ENCODE measurements at regions of chr4 and their contacts with region 1.

Region 1: DNA sequence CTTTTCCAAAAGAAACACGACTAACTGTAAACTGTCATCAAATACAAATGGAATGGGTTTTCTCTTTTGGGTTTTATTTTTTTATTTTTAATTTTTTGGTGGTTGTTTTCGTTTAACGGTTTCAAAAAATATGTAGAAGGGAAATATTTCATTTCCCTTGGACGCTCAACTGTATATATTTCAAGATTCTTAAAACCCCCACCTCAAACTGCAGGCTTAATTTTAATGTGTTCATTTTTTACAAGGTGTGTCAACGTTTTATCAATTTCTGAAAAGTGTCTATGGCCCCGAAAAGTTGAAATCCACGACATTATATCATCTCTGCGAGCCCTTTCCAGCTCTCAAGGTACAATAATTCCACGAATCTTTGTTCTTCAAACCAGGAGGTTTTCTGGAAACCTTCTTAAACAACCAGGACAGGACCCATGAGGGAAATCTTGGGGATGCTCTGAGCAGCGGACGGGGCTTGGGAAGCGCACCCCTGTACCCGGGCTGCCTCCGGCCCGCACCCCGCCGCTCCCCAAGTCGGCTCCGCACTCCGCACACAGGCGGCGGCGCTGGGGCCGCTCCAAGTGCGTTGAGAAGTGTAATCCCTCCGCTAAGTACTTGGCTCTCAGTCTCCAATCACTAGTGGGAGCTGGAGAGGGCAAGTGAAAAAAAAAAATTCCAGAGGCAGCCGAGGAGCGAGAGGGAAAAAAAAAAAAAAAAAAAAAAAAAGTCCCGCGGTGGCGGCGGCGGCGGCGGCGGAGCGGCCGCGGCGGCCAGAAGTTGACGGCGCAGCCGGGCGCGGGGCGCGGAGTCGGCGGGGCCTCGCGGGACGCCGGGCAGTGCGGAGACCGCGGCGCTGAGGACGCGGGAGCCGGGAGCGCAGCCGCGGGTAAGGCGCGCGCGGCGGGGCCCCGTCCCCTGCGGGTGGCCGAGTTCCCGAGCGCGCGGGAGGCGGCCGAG is at the start of gene BMPR1B:
- DNase-seq: peak in 1 of 2 donors; percentile 74
- H3K4me3 ChIP-seq: peak within 1 kb of the TSS; percentile 76 to 81
- H3K27ac ChIP-seq: peak within 1 kb of the TSS; percentile 79 to 85
- H3K4me1 ChIP-seq: no peaks in the 10 kb centered on the region
- H3K27me3 ChIP-seq: no peaks in the 10 kb centered on the region
- CTCF ChIP-seq: peak in 1 of 3 experiments; percentile 12
- total RNA-seq, gene BMPR1B: 3.8 TPM

Region 2: DNA sequence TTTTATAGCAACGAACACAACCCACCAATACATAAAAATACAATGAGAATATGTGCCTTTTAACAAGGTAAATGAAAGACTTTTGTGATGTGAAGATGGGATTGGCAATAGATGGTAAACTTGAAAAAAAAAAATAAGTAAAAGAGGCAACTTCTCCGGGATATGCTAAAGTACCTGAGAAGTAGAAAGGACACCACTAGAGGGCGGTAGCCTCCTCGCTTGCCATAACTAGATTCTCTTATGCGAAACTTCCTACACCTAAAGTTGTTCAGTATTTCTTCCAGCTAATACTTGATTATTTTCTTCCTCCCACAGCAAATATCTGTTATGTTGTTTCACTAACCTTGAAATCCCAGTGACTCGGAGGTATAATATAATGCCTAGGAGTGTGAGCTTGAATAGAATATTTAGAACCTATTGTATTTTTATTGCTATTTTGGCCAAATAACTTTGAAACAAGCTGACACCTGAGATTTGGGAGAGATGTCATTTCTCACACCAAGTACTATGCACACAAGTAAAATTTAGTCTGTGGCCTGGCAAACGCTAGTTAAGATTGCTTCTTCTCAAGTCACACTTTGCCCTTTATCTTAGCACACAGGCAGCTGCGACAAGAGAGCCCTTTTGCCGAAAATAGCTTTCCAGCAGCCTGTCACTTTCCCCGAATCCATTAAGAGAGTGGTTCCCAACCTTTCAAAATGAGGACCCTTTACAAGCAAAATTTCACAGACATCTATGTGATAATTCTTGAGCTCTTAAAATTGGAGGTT is 350.6 kb before region 1 on chr4:
- intact Hi-C with region 1: loop called (anchors 10 kb)
- DNase-seq: peak in 1 of 2 donors; percentile 91
- H3K4me3 ChIP-seq: peak overlapping the region in 1 of 2 donors; percentile 57
- H3K27ac ChIP-seq: peak overlapping the region; percentile 80 to 82
- H3K4me1 ChIP-seq: peaks cover 10 to 26% of the 10 kb centered on the region in 2 donors
- H3K27me3 ChIP-seq: no peaks in the 10 kb centered on the region
- CTCF ChIP-seq: peak; percentile 34 to 88 (median 86)

Region 3: DNA sequence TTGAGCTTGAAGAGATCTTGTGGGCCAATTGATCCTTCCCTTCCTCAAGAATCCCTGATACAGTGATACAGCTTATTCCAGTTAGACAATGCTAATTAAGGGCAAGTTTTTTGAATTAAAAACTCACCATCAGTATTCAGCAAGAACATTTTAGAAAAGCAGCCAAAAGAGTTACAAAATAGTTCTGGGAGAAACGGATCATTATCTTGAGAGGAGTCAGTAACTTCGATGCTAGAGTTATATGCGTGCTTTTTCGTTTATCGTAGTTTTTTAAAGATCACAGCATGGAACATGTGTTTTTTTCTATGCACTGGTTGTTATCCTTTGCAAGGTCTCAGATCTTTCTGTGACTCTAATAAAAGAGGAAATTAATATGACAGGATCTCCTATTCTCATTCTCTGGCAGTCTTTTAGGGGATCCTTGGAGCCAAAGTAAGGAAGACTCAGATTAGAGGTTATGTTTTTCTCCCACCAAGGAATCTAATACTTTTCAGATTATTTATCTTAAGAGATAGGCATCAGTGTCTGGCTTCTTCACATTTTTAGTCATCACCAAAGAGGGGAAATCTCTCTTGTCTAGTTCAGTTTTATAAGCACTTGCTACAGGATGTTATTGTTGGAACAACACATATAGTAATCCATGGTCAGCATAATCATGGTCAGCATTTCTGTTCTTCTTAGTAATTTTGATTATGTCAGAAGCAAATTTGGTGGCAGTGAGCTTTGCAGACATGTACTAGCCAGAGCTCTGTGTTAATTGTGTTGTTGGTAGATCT is 196.0 kb before region 1 on chr4:
- intact Hi-C with region 1: no loop called
- DNase-seq: no peak
- H3K4me3 ChIP-seq: no peak overlapping the region
- H3K27ac ChIP-seq: peak overlapping the region; percentile 64 to 65
- H3K4me1 ChIP-seq: peaks cover 4 to 56% of the 10 kb centered on the region in 2 donors
- H3K27me3 ChIP-seq: no peaks in the 10 kb centered on the region
- CTCF ChIP-seq: no peak

Region 4: DNA sequence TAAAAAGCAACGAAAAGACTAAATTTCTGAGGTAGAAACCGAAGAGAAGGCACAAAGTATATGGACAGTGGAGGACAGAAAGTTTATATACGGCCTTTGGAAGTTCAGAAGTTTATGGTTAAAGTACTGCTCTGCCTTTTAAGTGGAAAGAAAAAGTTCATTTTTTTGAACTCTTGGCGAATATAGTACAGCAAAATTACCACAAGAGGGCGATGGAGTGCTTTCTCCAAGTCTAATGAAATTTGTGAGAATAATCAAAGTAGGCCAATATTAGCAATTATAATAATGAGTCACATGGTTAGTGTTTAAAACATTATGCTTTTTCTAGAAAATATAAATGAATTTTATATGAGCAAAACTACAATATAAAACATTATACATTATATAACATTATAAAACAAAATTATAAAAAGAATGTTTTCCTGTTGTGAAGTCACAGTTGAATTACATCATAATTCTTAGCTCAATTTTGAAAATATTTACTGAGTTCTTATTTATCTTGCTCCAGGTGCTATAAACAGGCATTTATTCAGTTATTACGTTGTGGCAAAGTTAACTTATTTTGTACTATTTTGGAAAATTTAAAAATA is 135.9 kb before region 1 on chr4:
- intact Hi-C with region 1: loop called (anchors 5 kb)
- DNase-seq: no peak
- H3K4me3 ChIP-seq: no peak overlapping the region
- H3K27ac ChIP-seq: no peak overlapping the region
- H3K4me1 ChIP-seq: peaks cover 0 to 2% of the 10 kb centered on the region in 2 donors
- H3K27me3 ChIP-seq: no peaks in the 10 kb centered on the region
- CTCF ChIP-seq: peak; percentile 39 to 75 (median 65)

Region 5: GRCh38 chr4:94788643-94789042 is 31.2 kb after region 1 on chr4:
- intact Hi-C with region 1: no loop called
- DNase-seq: no peak
- H3K4me3 ChIP-seq: no peak overlapping the region
- H3K27ac ChIP-seq: no peak overlapping the region
- H3K4me1 ChIP-seq: no peaks in the 10 kb centered on the region
- H3K27me3 ChIP-seq: no peaks in the 10 kb centered on the region
- CTCF ChIP-seq: no peak

Region 6: GRCh38 chr4:94889946-94890345 is 132.5 kb after region 1 on chr4:
- intact Hi-C with region 1: loop called (anchors 5 kb)
- DNase-seq: no peak
- H3K4me3 ChIP-seq: no peak overlapping the region
- H3K27ac ChIP-seq: peak overlapping the region in 1 of 2 donors; percentile 3
- H3K4me1 ChIP-seq: peaks cover 0 to 10% of the 10 kb centered on the region in 2 donors
- H3K27me3 ChIP-seq: no peaks in the 10 kb centered on the region
- CTCF ChIP-seq: no peak

Region 7: DNA sequence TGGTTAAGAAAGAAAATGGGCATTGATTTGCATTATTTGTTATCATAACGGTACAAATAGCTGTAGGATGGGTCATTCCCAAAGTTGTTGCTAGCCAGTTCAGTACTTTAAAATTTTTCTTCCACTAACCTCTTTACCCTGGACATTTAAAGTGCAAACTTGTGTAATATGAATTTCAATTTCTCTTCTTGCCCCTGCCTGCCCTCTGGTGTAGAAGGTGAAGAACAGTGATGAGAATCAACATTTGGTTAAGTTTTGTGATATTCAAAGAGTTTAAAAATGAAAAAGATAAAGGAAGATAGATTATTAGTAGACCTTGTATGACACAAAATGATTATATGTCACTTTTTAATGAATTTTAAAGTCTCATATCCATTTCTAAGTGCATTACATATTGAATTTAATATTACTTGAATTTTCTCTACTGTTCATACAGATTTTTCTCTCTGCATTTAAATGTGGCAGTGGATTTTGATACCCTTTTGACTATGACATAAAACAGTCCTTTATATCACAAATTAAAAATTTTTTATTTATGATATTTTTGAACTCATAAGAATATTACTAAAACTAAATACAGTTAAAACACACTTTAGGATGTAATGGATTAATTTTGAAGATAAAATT is 338.0 kb after region 1 on chr4:
- intact Hi-C with region 1: loop called (anchors 1 kb)
- DNase-seq: no peak
- H3K4me3 ChIP-seq: no peak overlapping the region
- H3K27ac ChIP-seq: no peak overlapping the region
- H3K4me1 ChIP-seq: peaks cover 0 to 4% of the 10 kb centered on the region in 2 donors
- H3K27me3 ChIP-seq: no peaks in the 10 kb centered on the region
- CTCF ChIP-seq: peak; percentile 34 to 70 (median 69)